Activated CD8-positive, alpha-beta T cell treated with anti-CD3 and anti-CD28 coated beads, Interleukin-2, amount 10 ng/mL, durations not matched to agents 7 days and 5 days (primary cell): ENCODE measurements at regions of chr11 and their contacts with region 1.

Region 1: DNA sequence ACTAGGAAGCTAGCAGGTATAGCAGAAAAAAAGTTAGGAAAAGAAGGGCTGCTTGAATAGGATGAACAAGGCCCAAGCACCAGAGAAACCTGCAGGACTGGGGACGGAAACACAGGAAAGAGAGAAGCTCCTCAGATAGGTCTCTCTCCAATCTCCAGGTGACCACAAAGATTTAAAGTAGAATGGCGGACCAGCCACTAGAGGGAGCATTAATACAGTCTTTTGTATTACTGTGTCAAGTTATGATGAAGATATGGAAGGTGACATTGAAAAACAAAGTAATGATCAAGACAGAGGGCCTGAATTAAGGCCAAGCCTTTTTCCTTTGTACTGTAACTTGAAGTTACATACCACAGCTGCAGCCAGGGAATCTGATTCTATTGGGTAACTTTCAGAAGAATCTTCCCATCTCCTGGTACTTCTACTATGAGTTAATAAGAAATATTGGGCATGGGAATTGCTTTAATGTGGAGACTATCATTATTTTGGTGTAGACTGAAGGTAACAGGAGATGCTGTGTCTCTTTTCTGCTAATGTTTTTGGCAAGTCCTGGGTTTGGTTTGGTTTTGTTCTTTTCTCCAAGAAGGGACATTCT is 33.8 kb downstream of the OR2AG2 start:
- DNase-seq: peak; percentile 83
- ATAC-seq: peak; percentile 77
- H3K4me3 Mint-ChIP-seq: no peak overlapping the region
- H3K27ac Mint-ChIP-seq: no peak overlapping the region
- H3K4me1 Mint-ChIP-seq: peaks cover 87% of the 10 kb centered on the region
- H3K27me3 Mint-ChIP-seq: no peaks in the 10 kb centered on the region

Region 2: DNA sequence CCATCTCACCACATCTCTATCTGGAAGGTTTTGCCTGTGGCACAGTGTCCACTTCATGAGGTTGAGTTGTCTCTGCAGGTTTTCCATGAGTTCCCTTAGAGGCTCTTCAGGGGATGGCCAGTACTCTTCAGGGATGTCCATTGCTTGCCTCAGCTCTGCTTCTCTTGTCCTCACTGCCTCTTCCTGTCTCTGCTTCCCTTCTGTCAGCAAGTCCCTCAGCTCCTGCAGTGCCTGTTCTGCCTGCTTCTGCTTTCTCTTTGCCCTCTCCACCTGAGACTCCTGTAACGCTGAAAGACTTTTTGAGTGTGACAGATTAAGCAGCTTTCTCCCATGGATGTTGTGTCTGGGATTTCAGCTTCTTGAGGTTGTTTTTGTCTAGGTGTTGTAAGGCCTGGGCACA is 16.6 kb before region 1 on chr11:
- CTCF ChIA-PET with region 1: interaction called, 12 read pairs
- POLR2A ChIA-PET with region 1: interaction called, 5 read pairs
- DNase-seq: no peak
- ATAC-seq: no peak
- H3K4me3 Mint-ChIP-seq: no peak overlapping the region
- H3K27ac Mint-ChIP-seq: peak overlapping the region; percentile 44
- H3K4me1 Mint-ChIP-seq: peaks cover 46% of the 10 kb centered on the region
- H3K27me3 Mint-ChIP-seq: no peaks in the 10 kb centered on the region